Naive thymus-derived CD4-positive, alpha-beta T cell (primary cell): ENCODE measurements at regions of chr3 and their contacts with region 1.

Region 1: GRCh38 chr3:152405915-152406802 is 137.4 kb downstream of the MBNL1 start:
- DNase-seq: no peak
- ATAC-seq: no peak
- H3K4me3 ChIP-seq: no peak overlapping the region
- H3K4me3 Mint-ChIP-seq: peak overlapping the region in 6 of 10 donors; percentile 2 to 35 (median 24)
- H3K27ac ChIP-seq: peak overlapping the region; percentile 32
- H3K27ac Mint-ChIP-seq: peak overlapping the region; percentile 15 to 87 (median 52)
- H3K4me1 ChIP-seq: peaks cover 33 to 52% of the 10 kb centered on the region in 2 donors
- H3K4me1 Mint-ChIP-seq: peaks cover 42 to 93% (median 84%) of the 10 kb centered on the region in 7 donors
- H3K27me3 ChIP-seq: no peaks in the 10 kb centered on the region
- H3K27me3 Mint-ChIP-seq: no peaks in the 10 kb centered on the region

Region 2: GRCh38 chr3:151183265-151183671 is 1222.9 kb before region 1 on chr3:
- CTCF ChIA-PET with region 1: no interaction called
- POLR2A ChIA-PET with region 1: no interaction called
- intact Hi-C with region 1: no loop called
- DNase-seq: peak in 4 of 9 donors; percentile 13 to 65 (median 54)
- ATAC-seq: peak; percentile 69
- H3K4me3 ChIP-seq: no peak overlapping the region
- H3K4me3 Mint-ChIP-seq: peak overlapping the region; percentile 58 to 85 (median 78)
- H3K27ac ChIP-seq: peak overlapping the region; percentile 38
- H3K27ac Mint-ChIP-seq: peak overlapping the region; percentile 66 to 90 (median 83)
- H3K4me1 ChIP-seq: peaks cover 4 to 15% of the 10 kb centered on the region in 2 donors
- H3K4me1 Mint-ChIP-seq: peaks cover 20 to 60% (median 44%) of the 10 kb centered on the region in 7 donors
- H3K27me3 ChIP-seq: no peaks in the 10 kb centered on the region
- H3K27me3 Mint-ChIP-seq: peaks cover 0 to 4% (median 0%) of the 10 kb centered on the region in 5 donors

Region 3: DNA sequence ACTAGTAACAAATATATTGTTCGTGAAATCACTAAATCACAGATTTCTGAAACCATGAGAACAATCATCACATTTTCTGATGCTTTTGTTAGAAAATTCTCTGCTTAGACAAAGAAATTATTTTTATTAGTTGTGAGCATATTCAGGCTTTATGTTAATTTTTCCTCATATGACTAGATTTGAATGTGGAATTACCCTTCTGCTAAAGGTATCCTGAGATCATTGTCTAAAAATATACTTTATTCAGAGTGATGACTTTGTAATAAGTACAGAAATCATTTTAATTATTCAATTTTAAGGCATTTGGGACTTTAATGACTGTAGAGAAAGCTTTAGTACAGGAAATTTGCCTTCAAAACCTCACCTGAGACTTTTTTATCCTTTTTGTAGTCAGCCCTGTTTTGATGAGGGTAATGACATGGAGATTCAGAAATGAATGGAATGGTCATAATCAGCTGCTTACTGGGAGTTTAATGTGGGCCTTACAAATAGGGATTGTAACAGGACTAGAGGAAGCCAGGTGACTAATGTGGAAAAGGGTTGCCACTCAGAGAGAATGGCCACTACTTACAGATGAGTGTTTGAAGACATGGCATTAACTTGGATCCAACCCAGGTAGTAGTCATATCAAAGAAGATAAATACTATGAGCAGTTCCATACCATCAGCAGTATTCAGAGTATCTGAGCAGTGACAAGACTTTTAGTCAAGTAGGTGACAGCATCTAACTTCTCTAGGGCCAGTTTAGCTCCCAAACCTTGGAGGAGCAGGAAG is 10.8 kb after region 1 on chr3:
- CTCF ChIA-PET with region 1: no interaction called
- POLR2A ChIA-PET with region 1: interaction called, 4 read pairs
- intact Hi-C with region 1: loop called in 1 of 2 experiments (anchors 1 kb)
- DNase-seq: no peak
- ATAC-seq: no peak
- H3K4me3 ChIP-seq: no peak overlapping the region
- H3K4me3 Mint-ChIP-seq: peak overlapping the region in 4 of 10 donors; percentile 2 to 20 (median 8)
- H3K27ac ChIP-seq: no peak overlapping the region
- H3K27ac Mint-ChIP-seq: peak overlapping the region; percentile 3 to 71 (median 51)
- H3K4me1 ChIP-seq: peaks cover 10 to 17% of the 10 kb centered on the region in 2 donors
- H3K4me1 Mint-ChIP-seq: peaks cover 29 to 79% (median 59%) of the 10 kb centered on the region in 7 donors
- H3K27me3 ChIP-seq: no peaks in the 10 kb centered on the region
- H3K27me3 Mint-ChIP-seq: no peaks in the 10 kb centered on the region